HAP-1 (cell line): ENCODE measurements at regions of chr9 and their contacts with region 1.

Region 1: DNA sequence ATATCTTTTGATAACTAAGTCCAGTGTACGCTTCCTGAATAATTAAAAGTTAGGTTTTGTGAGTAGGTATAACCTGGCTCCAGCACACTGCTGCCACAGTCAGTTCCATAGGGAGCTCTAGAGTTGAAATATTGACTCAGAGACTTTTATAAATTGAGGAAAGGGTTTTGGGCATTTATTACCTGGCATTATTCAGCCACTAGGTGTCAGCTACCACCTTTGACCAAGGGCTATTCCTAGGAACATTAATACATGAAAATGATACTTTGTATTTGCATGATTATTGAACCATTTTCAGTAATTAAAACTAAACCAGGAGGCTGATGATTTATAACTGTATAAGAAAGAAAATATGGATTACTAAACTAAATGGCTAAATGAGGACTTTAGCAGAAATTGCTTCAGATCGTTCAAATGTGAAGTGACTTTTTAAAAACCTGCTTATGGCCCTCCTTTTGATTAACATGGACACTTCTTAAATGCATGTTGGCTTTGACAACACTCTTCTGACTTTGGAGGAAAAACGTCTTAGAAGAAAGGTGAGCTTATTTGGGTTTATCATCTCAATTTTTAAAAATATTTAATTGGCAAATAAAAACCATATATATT is 83.0 kb downstream of the SMC2 start:
- DNase-seq: no peak
- H3K4me3 ChIP-seq: no peak overlapping the region
- H3K4me1 ChIP-seq: peaks cover 14% of the 10 kb centered on the region
- H3K27me3 ChIP-seq: no peaks in the 10 kb centered on the region

Region 2: DNA sequence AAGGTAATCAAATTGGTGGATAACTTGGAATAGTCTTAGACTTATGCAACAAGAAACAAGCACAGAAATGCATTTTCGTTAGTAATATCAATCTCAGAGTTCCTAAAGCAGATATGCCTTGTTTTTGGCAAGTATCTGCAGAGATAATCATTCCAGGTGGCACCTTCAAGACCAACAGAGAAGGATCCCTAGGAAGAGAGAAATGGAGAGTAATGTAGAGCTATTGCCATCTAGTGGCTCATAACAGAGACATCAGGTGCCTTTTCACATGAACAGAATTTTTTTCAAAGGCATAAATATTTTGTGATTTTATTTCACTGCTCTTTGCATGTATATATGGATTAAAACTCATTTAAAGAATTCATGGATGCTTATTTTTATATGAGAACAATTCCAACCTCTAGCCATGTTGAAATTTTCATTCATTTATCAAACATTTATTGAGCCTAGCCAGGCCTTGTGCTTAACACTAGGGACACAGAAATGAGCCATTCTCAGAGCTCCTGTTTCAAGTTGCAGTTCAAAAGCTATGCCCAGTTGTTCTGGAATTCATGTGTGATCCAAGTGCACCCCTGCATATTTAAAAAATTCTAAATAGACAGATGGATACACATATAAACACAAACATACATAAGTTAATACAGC is 209.4 kb after region 1 on chr9:
- in situ Hi-C with region 1: loop called (anchors 10 kb)
- DNase-seq: peak in 1 of 2 experiments; percentile 60
- H3K4me3 ChIP-seq: no peak overlapping the region
- H3K4me1 ChIP-seq: peaks cover 5% of the 10 kb centered on the region; the same call in 1 of the 2 replicates
- H3K27me3 ChIP-seq: no peaks in the 10 kb centered on the region